IMR-90 (cell line): ENCODE measurements at regions of chr2 and their contacts with region 1.

Region 1: DNA sequence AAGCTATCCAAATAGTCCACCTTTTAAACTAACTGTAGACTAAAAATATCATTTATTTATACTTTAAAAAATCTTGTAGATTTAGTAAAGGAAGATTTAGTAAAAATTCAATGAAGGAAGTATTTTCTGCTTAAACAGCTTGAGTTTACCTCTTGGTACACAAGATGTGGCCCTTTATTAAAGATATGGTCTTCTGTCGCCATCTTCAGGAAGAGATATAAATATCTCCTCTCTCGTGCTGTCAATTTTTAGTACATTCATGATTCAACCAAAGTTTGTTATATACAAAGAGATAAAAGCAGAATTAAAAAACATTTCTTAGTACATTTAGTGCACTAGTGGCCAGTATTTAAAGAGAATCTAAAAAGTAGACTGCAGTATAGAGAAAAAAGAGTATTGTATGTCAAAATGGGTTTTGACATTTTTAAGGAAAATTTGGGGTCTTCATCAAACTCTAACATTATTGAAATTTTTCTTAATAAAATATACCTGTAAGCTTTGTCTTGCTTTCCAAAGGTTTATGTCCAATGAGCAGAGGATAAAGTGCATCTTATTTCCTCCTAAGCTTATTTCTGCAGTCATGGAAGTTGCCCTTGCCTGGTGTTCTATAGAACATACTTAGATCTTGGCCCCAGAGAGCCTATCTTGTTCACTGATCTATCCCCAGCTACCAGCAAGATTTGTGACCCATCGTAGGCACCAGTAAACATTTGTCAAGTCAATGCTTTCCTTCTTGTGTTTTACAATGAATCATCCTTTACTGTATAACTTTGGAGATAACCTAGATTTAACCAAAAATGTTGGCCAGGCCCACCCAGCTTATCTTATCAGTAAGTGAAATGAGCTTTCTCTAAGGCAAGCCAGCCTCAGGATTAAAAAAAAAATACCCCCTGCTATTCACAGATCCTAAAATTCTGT is 18.5 kb upstream of the EML6 start:
- DNase-seq: peak; percentile 77
- ATAC-seq: peak; percentile 87
- H3K4me3 ChIP-seq: no peak overlapping the region
- H3K27ac ChIP-seq: no peak overlapping the region
- H3K4me1 ChIP-seq: no peaks in the 10 kb centered on the region; the same call in 1 of the 2 replicates
- H3K27me3 ChIP-seq: peaks cover 15% of the 10 kb centered on the region
- CTCF ChIP-seq: peak; percentile 81
- POLR2A ChIP-seq: no peak
- RAD21 ChIP-seq: peak; percentile 85

Region 2: DNA sequence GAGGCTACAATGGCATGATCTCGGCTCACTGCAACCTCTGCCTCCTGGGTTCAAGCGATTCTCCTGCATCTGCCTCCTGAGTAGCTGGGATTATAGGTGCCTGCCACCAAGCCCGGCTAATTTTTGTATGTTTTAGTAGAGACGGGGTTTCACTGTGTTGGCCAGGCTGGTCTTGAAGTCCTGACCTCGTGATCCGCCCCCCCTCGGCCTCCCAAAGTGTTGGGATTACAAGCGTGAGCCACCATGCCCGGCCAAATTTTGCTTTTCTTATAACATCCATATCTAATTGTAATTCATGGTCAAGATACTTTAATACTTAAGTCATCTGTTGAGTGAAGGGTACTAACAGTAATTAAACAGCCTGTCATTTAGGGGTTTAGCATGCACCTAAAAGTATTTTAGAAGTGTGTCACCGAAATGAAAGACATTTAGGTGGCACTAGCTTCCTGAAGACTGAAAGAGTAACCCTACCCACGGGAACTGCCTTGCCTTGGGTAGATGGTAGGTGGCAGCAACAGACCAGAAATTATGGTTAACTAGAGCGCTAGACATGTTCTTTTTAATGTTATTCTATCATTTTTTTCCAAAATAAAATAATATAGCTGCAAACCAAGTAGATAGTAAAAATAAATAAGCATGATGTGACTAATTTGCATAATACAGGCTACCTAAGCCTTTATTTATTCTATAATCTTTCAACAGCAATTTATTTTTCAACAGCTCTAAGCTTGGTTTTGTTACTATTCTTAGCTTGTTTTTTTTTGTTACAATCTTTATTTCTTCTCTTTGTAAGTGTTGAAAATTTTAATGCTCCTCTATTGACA is 598.1 kb before region 1 on chr2:
- CTCF ChIA-PET with region 1: interaction called, 13 read pairs
- POLR2A ChIA-PET with region 1: no interaction called
- dilution Hi-C with region 1: no loop called
- in situ Hi-C with region 1: loop called (anchors 10 kb)
- intact Hi-C with region 1: loop called (anchors 1 kb)
- DNase-seq: peak; percentile 66
- ATAC-seq: peak; percentile 86
- H3K4me3 ChIP-seq: no peak overlapping the region
- H3K27ac ChIP-seq: no peak overlapping the region
- H3K4me1 ChIP-seq: peaks cover 3% of the 10 kb centered on the region
- H3K27me3 ChIP-seq: no peaks in the 10 kb centered on the region
- CTCF ChIP-seq: peak; percentile 83
- POLR2A ChIP-seq: no peak
- RAD21 ChIP-seq: peak; percentile 82

Region 3: GRCh38 chr2:54161660-54162424 is 543.1 kb before region 1 on chr2:
- CTCF ChIA-PET with region 1: interaction called, 3 read pairs
- POLR2A ChIA-PET with region 1: no interaction called
- dilution Hi-C with region 1: no loop called
- in situ Hi-C with region 1: loop called (anchors 10 kb)
- intact Hi-C with region 1: loop called (anchors 5 kb)
- DNase-seq: peak; percentile 15
- ATAC-seq: no peak
- H3K4me3 ChIP-seq: no peak overlapping the region
- H3K27ac ChIP-seq: no peak overlapping the region
- H3K4me1 ChIP-seq: no peaks in the 10 kb centered on the region
- H3K27me3 ChIP-seq: no peaks in the 10 kb centered on the region
- CTCF ChIP-seq: no peak; the same call in 1 of the 2 replicates
- POLR2A ChIP-seq: no peak
- RAD21 ChIP-seq: no peak

Region 4: GRCh38 chr2:54295911-54296310 is 409.0 kb before region 1 on chr2:
- CTCF ChIA-PET with region 1: no interaction called
- POLR2A ChIA-PET with region 1: no interaction called
- dilution Hi-C with region 1: no loop called
- in situ Hi-C with region 1: no loop called
- intact Hi-C with region 1: no loop called
- DNase-seq: no peak
- ATAC-seq: peak; percentile 66
- H3K4me3 ChIP-seq: no peak overlapping the region
- H3K27ac ChIP-seq: no peak overlapping the region
- H3K4me1 ChIP-seq: peaks cover 2% of the 10 kb centered on the region; the same call in 1 of the 2 replicates
- H3K27me3 ChIP-seq: peaks cover 2% of the 10 kb centered on the region; the same call in 1 of the 2 replicates
- CTCF ChIP-seq: no peak
- POLR2A ChIP-seq: no peak
- RAD21 ChIP-seq: no peak

Region 5: GRCh38 chr2:54350426-54350825 is 354.5 kb before region 1 on chr2:
- CTCF ChIA-PET with region 1: no interaction called
- POLR2A ChIA-PET with region 1: no interaction called
- dilution Hi-C with region 1: no loop called
- in situ Hi-C with region 1: no loop called
- intact Hi-C with region 1: loop called (anchors 5 kb)
- DNase-seq: no peak
- ATAC-seq: no peak
- H3K4me3 ChIP-seq: no peak overlapping the region
- H3K27ac ChIP-seq: no peak overlapping the region
- H3K4me1 ChIP-seq: no peaks in the 10 kb centered on the region
- H3K27me3 ChIP-seq: no peaks in the 10 kb centered on the region; the same call in 1 of the 2 replicates
- CTCF ChIP-seq: no peak
- POLR2A ChIP-seq: no peak
- RAD21 ChIP-seq: no peak

Region 6: DNA sequence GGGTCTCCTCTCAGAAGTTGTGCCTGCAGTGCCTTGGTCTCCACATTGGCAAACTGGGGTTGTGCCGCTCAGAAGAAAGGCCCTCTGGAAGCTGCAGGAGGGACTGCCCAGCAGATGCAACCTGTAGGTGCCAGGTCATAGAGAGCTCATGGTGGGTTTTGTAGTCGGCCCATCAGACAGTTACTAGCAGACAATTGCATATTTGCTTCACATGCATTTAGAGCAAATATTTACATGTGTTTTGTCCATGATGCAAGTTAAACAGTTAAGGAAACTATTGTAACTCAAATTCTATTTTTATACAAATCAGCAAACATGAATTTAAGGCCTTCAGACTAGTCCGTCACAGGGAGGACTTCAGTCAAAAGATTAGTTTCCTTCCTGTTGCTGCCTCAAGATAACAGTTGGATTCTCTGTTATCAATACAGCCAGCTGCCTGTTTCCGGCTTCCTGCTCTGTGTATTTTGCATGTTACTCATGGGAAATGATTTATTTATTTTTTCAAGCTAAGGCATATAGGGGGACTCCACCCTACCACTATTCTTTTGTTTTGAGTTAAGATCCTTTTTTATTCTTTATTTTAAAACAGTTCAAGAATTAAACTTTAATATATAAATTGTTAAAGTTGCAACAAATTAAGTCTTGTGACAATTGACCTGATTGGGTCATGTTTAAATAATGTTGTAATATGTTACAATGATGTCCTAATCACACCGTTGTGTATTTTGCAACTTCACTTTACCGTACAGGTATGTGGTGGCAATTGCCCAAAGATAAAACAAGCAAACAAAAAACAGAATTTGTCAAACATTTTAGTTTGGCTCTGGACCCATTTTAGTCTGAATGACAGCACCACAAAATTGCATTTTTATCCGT is 115.4 kb before region 1 on chr2:
- CTCF ChIA-PET with region 1: no interaction called
- POLR2A ChIA-PET with region 1: no interaction called
- dilution Hi-C with region 1: no loop called
- in situ Hi-C with region 1: no loop called
- intact Hi-C with region 1: no loop called
- DNase-seq: peak; percentile 70
- ATAC-seq: peak; percentile 79
- H3K4me3 ChIP-seq: no peak overlapping the region
- H3K27ac ChIP-seq: no peak overlapping the region
- H3K4me1 ChIP-seq: peaks cover 11% of the 10 kb centered on the region
- H3K27me3 ChIP-seq: no peaks in the 10 kb centered on the region
- CTCF ChIP-seq: no peak
- POLR2A ChIP-seq: no peak
- RAD21 ChIP-seq: no peak

Region 7: DNA sequence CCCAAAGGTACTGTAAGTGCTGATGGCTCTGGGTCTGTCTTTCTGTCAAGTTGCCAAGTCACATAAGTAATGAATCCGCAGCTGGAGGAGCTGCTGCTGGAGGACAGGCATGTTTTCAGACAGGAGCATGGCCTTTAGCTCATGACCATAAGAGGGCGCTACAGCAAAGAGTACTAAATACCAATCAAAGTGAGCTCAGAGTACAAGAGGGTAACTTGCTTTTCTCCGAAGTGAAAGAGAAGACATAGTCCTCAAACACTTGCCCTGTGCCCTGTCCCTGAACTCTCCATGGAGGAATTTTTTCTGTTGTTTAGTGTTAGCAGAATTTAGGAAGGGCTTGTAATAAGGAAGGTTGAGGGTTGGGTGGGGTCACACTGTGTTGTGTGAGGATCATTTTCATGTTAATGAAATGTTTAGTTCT is 39.5 kb before region 1 on chr2:
- CTCF ChIA-PET with region 1: interaction called, 13 read pairs
- POLR2A ChIA-PET with region 1: interaction called, 5 read pairs
- dilution Hi-C with region 1: no loop called
- in situ Hi-C with region 1: no loop called
- intact Hi-C with region 1: loop called (anchors 2 kb)
- DNase-seq: peak; percentile 68
- ATAC-seq: no peak
- H3K4me3 ChIP-seq: no peak overlapping the region
- H3K27ac ChIP-seq: no peak overlapping the region
- H3K4me1 ChIP-seq: peaks cover 17% of the 10 kb centered on the region
- H3K27me3 ChIP-seq: no peaks in the 10 kb centered on the region
- CTCF ChIP-seq: peak; percentile 45
- POLR2A ChIP-seq: no peak
- RAD21 ChIP-seq: peak; percentile 29; the same call in 1 of the 2 replicates